ENCODE measurements at regions of chr10 and their contacts with region 1.

Region 1: DNA sequence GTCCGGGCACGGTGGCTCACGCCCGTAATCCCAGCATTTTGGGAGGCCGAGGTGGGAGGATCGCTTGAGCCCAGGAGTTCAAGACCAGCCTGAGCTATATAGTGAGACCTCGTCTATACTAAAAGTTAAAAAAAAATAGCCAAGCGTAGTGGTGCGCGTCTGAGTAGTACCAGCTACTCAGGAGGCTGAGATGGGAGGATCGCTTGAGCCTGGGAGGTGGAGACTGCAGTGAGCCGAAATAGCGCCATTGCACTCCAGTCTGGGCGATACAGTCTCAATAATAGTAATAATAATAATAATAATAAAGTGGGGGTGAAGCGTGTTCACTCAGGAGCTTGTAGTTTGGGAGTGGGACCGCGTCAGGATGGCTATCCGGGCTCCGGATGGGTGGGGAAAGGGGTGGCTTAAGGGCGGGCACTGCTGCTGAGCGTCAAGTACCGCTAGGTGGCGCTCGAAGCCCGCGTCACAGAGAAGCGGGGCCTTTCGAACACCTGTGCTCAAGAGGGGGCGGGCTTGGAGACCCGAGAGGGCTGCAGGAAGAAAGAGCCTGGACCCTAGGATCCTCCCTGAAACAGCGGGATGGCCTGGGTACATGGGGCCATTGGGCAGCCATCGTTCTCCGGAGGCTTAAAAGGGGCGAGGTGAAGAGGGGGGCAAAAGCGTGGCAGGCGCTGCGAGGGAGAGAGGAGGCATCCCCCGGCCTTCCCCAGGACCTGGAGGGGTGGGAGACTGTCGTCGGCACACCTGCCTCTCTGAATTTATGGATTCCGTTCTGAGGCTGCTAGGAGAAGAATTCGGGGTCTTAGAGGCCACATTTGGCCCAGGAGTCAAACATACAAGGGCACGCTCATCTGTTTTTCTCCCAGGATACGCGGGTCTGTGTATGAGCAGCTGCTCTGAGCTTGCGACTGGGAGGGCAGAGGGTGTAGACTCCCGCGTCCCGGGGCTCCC is 14.5 kb downstream of the LBX1 start:
- DNase-seq: peak; percentile 78
- H3K4me3 ChIP-seq: peak overlapping the region; percentile 46
- H3K27ac ChIP-seq: no peak overlapping the region
- H3K4me1 ChIP-seq: peaks cover 27% of the 10 kb centered on the region
- H3K27me3 ChIP-seq: peaks cover 57% of the 10 kb centered on the region
- CTCF ChIP-seq: peak; percentile 95

Region 2: DNA sequence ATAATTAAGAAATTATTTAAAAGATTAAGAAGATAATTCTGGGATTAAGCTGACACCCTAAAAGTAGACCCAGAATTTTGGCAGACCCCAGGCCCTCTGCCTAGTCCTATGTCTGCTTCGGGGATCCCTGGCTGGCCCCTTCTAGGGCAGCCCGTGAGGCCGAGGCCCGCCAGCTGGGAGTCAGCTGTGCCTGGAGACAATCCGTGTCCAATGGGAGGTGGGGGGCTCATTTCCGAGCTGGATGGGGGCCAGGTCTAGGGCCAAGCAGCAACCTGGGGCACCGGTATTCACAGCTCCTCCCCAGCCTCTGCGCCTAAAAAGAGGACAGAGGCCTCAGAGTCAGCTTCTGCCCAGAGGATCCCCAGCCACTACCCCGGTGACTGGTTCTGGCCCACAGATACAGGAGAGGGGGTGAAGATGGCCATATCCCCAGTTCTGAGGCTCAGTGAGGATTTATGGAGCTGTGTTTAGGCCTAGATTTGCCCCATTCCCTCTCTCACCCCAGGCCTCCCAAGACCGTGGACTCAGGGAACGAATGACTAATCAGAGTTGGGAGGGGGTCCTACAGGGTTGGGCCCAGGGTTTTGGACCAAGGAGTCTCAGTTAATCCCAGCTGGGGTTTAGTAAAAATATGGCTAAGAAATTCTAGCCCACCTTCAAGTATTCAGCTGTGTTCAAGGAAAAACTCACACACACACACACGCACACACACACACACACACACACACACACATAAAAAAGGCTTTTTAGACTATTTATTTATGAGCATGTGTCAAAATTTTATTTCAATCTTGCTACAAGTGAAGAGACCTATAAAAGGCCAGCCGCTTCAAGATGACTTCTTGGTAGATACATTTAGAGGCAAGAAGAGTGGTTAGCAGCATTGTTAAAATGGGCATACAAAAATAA is 51.9 kb after region 1 on chr10:
- CTCF ChIA-PET with region 1: no interaction called
- POLR2A ChIA-PET with region 1: no interaction called
- intact Hi-C with region 1: loop called (anchors 5 kb)
- DNase-seq: peak; percentile 20
- H3K4me3 ChIP-seq: no peak overlapping the region
- H3K27ac ChIP-seq: no peak overlapping the region
- H3K4me1 ChIP-seq: peaks cover 17% of the 10 kb centered on the region
- H3K27me3 ChIP-seq: peaks cover 3% of the 10 kb centered on the region
- CTCF ChIP-seq: no peak

Region 3: GRCh38 chr10:101291331-101292193 is 76.8 kb after region 1 on chr10:
- CTCF ChIA-PET with region 1: interaction called, 5 read pairs
- POLR2A ChIA-PET with region 1: no interaction called
- intact Hi-C with region 1: loop called (anchors 2 kb)
- DNase-seq: peak; percentile 75
- H3K4me3 ChIP-seq: peak overlapping the region; percentile 45
- H3K27ac ChIP-seq: no peak overlapping the region
- H3K4me1 ChIP-seq: peaks cover 14% of the 10 kb centered on the region
- H3K27me3 ChIP-seq: peaks cover 37% of the 10 kb centered on the region
- CTCF ChIP-seq: peak; percentile 84

Region 4: DNA sequence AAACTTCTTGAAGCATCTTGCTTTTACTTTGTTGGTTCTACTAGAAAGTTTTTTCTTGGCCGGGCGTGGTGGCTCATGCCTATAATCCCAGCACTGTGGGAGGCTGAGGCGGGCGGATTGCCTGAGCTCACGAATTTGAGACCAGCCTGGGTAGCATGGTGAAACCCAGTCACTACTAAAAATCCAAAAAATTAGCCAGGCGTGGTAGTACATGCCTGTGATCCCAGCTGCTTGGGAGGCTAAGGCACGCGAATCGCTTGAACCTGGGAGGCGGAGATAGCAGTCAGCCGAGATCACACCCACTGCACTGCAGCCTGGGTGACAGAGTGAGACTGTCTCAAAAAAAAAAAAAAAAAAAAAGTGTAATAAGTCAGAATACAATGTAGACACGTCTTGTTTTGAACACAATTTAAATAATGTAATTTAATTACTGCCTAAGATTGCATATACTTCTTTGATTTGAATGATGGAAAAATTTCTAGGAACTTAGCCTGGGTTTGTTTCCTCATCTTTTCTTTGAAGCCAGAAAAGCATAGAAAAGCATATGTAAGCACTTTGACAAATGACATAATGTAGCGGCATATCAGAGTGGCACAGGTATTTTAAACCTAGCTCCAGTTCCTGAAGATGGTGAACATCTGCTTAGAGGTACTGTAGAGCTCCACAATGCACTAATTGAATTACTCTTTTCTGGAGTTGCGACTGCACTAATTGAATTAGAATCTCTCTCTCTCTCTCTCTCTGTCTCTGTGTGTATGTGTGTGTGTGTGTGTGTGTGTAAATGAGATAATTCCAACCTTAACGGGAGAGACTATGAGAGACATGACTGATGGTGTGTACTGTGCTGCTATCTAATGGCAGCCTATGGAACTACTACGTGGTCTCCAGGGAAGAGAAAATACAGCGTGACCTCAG is 227.1 kb after region 1 on chr10:
- CTCF ChIA-PET with region 1: interaction called, 5 read pairs
- POLR2A ChIA-PET with region 1: no interaction called
- intact Hi-C with region 1: loop called (anchors 5 kb)
- DNase-seq: peak; percentile 84
- H3K4me3 ChIP-seq: no peak overlapping the region
- H3K27ac ChIP-seq: no peak overlapping the region
- H3K4me1 ChIP-seq: peaks cover 8% of the 10 kb centered on the region
- H3K27me3 ChIP-seq: no peaks in the 10 kb centered on the region
- CTCF ChIP-seq: peak; percentile 75

Region 5: DNA sequence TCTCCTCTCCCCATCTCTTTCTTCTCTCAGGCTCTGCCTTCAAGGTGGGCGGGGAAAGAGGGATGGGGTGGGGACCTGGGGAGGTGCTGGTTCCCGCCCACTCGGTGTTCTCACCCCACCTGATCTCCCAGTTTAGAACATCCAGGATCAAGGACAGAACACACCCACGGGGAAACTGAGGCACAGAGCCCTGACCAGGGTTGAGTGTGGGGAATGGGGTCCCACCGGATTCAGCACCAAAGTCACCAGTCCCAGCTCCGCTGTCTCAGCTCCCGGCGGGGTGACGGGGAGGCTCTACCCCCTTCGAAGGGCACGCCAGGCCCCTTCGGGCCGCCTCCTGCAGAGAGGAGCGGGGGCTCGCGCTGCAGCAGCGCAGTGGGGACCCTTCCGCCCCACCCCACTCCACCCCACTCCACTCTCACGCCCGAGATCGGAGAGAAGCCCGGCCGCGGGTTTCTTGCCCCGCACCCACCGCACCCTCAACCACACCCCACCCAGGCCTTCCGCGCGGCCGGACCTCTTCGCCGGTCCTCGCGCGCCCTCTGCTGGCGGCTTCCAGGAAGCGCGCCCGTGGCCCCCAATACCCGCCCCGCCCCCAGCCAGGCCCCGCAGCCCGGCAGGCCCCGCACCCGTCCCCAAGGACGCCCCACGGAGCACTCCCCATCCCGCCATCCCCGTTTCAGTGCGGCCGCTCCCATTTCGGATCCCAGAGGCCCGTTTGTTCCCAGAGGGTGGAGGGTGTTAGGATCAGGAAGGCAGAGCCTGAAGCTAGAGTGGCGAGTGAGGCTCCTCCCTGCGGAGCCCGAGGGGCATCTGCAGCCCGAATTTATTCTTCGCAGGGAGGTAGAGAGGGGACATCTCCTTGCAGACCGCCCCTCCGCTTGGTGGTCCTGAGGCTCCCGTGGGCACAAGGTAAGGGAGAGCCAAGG is 355.4 kb after region 1 on chr10:
- CTCF ChIA-PET with region 1: interaction called, 21 read pairs
- POLR2A ChIA-PET with region 1: no interaction called
- intact Hi-C with region 1: loop called (anchors 1 kb)
- DNase-seq: peak; percentile 77
- H3K4me3 ChIP-seq: peak overlapping the region; percentile 58
- H3K27ac ChIP-seq: no peak overlapping the region
- H3K4me1 ChIP-seq: peaks cover 28% of the 10 kb centered on the region
- H3K27me3 ChIP-seq: peaks cover 6% of the 10 kb centered on the region
- CTCF ChIP-seq: peak; percentile 78

Region 6: DNA sequence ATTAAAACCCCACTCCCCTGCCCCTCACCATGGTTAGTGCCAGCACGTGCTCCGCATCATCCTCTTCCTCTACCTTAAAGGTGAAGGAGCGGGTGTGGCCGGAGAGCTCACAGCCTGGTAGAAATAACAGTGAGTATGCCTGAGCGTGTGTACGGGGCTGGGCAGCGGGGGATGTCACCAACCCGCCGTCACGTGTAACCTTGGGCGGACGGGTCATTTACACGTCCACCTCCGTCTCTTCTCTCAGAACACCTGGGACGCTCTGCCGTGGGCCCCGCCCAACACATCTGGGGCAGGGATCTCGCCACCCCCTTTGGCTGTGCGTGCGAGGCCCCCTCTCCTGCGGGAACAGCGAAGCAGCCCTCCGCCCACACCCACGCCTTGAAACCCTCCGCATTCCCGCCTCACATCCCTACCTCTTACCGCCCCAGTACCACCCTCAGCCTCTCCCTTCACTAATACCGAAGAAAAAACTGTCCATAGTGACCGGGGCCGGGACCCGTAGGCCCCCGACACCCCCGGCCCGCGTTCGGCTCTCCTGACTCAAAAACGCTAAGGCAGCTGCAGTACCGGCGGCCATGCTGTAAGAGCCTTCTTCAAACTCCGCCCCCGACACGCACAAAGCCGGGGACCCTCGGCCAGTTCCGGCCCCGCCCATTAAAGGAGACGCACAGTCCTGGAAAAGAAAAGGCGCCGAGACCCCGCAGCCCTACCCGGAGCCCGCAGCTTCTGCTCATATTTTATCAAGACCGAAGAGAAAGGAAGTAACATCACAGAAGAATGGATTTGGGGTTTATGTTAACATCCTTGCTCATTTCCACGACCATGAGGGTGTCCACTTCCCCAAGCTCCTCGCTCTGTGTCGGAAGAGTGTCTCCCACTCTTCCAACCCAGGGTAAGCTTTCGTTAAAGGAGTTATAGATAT is 568.4 kb after region 1 on chr10 and contains the start of gene NPM3:
- CTCF ChIA-PET with region 1: interaction called, 12 read pairs
- POLR2A ChIA-PET with region 1: no interaction called
- intact Hi-C with region 1: loop called (anchors 1 kb)
- DNase-seq: peak; percentile 94
- H3K4me3 ChIP-seq: peak within 1 kb of the TSS; percentile 72
- H3K27ac ChIP-seq: peak within 1 kb of the TSS; percentile 43
- H3K4me1 ChIP-seq: peaks cover 26% of the 10 kb centered on the region
- H3K27me3 ChIP-seq: no peaks in the 10 kb centered on the region
- CTCF ChIP-seq: no peak
- total RNA-seq, gene NPM3: 94.7 and 98.2 TPM in 2 replicates

Region 7: DNA sequence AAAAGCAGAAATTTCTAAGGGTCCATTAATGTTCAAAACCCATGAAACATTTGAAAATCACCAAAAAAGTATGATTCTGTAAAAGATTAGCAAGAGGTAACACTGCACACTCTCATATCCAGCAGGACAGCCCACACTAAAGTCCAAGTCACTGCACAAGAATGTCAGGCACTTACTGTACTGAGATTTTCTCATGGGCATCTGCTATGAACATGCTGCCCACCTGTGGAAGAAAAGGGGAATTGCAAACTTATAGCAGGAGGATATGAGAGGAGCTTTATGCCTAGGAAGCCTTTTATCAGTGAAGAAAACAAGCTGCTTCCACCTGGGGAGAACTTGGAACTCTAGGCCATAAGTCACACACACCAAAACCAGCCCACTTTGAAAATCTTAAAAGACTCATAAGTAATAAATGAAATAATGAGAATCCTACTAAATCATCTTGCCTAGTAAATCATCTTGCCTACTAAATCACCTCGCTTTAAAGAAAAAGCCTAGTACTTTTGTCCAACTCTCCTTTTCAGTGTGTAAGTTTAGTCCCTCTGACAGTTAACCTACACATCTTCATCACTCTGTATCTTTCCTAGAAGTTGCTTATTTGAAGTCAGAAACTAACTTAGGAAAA is 795.2 kb after region 1 on chr10:
- CTCF ChIA-PET with region 1: no interaction called
- POLR2A ChIA-PET with region 1: no interaction called
- intact Hi-C with region 1: loop called (anchors 10 kb)
- DNase-seq: peak; percentile 88
- H3K4me3 ChIP-seq: no peak overlapping the region
- H3K27ac ChIP-seq: no peak overlapping the region
- H3K4me1 ChIP-seq: no peaks in the 10 kb centered on the region
- H3K27me3 ChIP-seq: no peaks in the 10 kb centered on the region
- CTCF ChIP-seq: peak; percentile 89